Calu3 (cell line): ENCODE measurements at regions of chr4 and their contacts with region 1.

Region 1: DNA sequence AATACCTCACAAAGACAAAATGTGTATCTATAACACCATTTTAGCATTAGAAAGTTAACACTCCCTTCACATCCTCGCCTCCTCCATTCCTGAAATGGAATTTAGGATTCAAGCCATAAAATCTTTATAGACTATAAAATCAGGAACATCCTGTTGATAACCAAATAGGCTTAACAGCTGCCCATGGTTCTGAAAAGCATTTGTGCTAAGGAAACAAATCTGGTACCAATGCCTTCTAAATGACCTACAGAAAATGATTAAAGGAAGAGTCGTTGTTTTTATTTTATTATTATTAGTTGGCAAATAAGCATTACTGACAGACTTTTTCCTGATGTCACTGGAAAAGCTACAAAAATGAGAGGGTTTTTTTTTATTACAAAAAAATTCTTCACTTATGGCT is 79.8 kb downstream of the PAPSS1 start:
- DNase-seq: no peak
- H3K4me3 Mint-ChIP-seq: no peak overlapping the region
- H3K27ac Mint-ChIP-seq: no peak overlapping the region
- H3K4me1 Mint-ChIP-seq: no peaks in the 10 kb centered on the region
- H3K27me3 Mint-ChIP-seq: no peaks in the 10 kb centered on the region
- CTCF ChIP-seq: no peak

Region 2: GRCh38 chr4:107709916-107710315 is 69.7 kb after region 1 on chr4:
- CTCF ChIA-PET with region 1: interaction called, 11 read pairs
- intact Hi-C with region 1: no loop called
- DNase-seq: no peak
- H3K4me3 Mint-ChIP-seq: no peak overlapping the region
- H3K27ac Mint-ChIP-seq: no peak overlapping the region
- H3K4me1 Mint-ChIP-seq: peaks cover 34% of the 10 kb centered on the region
- H3K27me3 Mint-ChIP-seq: no peaks in the 10 kb centered on the region
- CTCF ChIP-seq: no peak

Region 3: GRCh38 chr4:108370291-108371141 is 730.3 kb after region 1 on chr4:
- CTCF ChIA-PET with region 1: no interaction called
- intact Hi-C with region 1: no loop called
- DNase-seq: no peak
- H3K4me3 Mint-ChIP-seq: no peak overlapping the region
- H3K27ac Mint-ChIP-seq: no peak overlapping the region
- H3K4me1 Mint-ChIP-seq: no peaks in the 10 kb centered on the region
- H3K27me3 Mint-ChIP-seq: peaks cover 38% of the 10 kb centered on the region
- CTCF ChIP-seq: no peak